OCI-LY7 (cell line): ENCODE measurements at regions of chr7 and their contacts with region 1.

Region 1: GRCh38 chr7:69880840-69881239 is 282.6 kb downstream of the AUTS2 start:
- DNase-seq: peak; percentile 25
- H3K4me3 ChIP-seq: no peak overlapping the region
- H3K27ac ChIP-seq: no peak overlapping the region
- H3K4me1 ChIP-seq: peaks cover 26% of the 10 kb centered on the region
- CTCF ChIP-seq: no peak

Region 2: DNA sequence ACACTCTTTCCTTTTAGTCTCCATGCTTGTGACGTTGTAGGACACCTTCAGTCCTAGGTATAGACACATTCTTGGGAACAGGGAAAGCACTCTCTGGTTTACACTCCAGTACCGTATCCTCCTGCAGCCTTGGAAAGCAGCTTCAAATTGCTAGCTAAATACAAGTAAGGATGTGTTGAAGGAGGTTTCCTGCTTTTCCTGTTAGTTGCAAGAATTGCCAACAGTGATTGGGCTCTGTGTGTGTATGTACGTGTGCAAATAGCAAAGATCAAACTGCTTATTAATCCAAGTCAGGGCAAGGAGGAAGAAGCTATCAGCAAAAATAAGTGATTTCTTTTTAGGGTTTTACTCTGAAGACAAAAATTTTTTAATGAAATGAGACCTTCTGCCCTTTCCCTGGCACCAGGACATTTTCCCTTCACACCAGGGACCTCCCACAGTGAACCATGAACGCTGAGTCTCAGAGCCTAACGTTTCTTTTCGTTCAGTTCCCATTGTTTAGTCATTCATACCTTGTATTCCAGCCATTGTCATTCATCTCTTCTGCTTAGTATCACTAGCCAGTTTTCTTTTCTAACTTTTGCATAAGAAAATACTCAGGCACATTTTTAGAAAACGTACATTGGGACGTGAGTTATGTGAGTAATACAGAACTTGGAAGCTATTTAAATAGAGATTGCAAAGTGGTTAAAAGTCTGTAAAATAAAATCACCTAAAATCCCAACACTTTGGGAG is 319.4 kb before region 1 on chr7:
- CTCF ChIA-PET with region 1: no interaction called
- POLR2A ChIA-PET with region 1: no interaction called
- intact Hi-C with region 1: no loop called
- DNase-seq: no peak
- H3K4me3 ChIP-seq: no peak overlapping the region
- H3K27ac ChIP-seq: no peak overlapping the region
- H3K4me1 ChIP-seq: peaks cover 7% of the 10 kb centered on the region
- CTCF ChIP-seq: no peak

Region 3: DNA sequence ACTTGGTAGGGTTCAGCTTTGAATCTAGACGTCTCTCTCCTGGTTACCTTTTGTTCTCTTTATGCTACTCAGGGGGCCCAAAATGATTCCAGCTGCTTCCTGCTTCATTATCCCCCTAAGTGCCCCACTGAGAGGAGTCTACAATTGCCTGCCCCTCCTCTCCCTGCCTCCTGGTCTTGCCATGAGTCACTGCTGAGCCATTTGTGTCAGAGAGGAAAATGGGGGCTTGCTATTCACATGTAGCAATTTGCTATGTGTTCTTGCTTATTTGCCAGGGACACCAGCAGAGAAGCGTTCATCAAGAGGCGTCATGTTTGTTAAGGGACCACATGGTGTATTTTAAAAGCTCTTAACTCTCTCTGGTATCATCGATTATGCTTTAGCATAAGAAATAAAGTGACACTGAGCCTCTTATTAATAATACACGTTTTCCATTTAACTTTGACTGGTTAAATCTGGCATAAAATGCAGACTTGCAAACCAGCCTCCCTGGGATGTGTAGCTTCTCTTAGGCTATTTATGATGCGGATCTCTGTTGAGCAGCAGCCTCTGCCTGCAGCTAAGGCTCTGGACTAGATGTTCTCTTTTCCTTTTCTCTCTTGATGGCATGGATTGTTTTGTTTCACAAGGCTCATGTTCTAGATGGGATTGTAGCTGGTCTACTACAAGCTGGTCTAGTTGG is 43.3 kb before region 1 on chr7:
- CTCF ChIA-PET with region 1: no interaction called
- POLR2A ChIA-PET with region 1: interaction called, 12 read pairs
- intact Hi-C with region 1: no loop called
- DNase-seq: no peak
- H3K4me3 ChIP-seq: no peak overlapping the region
- H3K27ac ChIP-seq: no peak overlapping the region
- H3K4me1 ChIP-seq: peaks cover 62% of the 10 kb centered on the region
- CTCF ChIP-seq: no peak

Region 4: GRCh38 chr7:69868921-69869320 is 11.9 kb before region 1 on chr7:
- CTCF ChIA-PET with region 1: no interaction called
- POLR2A ChIA-PET with region 1: interaction called, 21 read pairs
- intact Hi-C with region 1: no loop called
- DNase-seq: no peak
- H3K4me3 ChIP-seq: no peak overlapping the region
- H3K27ac ChIP-seq: no peak overlapping the region
- H3K4me1 ChIP-seq: peaks cover 35% of the 10 kb centered on the region
- CTCF ChIP-seq: no peak